Heart left ventricle (tissue), 16 donors: ENCODE measurements at regions of chr1 and their contacts with region 1.

Region 1: GRCh38 chr1:208892147-208892546 is 648.0 kb upstream of the PLXNA2 start:
- DNase-seq: no peak
- ATAC-seq: no peak
- H3K4me3 ChIP-seq: no peak overlapping the region
- H3K27ac ChIP-seq: no peak overlapping the region
- H3K4me1 ChIP-seq: no peaks in the 10 kb centered on the region
- H3K27me3 ChIP-seq: no peaks in the 10 kb centered on the region
- CTCF ChIP-seq: no peak
- POLR2A ChIP-seq: no peak

Region 2: DNA sequence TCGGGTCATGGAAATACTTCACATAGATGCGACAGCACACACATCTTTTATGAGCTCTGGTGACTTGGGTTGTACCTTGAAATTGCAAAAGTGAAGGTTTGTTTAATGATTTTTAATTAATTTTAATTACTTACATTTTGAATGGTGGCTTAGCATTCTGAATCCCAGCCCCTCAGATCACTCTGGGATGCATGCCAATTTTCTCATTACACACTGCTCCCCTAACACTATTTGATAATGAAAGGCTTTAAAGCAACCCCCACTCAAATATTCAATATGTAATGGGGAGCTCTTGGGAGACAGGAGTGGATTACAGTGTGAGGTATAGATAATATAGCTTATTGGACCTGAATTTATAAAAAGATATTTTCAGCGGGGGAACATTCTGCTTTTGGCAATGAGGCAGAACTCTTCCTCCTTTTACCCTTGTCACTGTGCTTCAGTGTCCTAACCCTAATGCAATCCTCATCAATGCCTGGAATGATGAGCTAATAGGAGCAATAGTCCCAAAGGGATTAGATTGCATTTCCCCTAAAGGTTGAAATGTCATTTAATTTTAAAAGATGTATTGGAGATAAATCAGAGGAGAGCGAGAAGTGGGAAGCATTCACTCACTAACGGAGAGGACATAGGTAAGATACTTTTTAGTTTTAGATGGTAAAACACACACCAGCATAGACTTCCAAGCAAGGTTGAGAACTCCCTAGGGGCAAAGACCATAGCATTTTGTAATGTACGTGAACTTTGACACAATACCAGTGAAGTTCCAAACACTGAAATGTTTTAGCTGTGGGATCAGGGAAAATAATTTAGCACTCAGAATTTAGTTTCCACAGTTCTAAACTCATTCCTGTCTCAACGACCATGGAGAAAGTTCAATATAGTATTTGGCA is 263.9 kb before region 1 on chr1:
- intact Hi-C with region 1: no loop called
- DNase-seq: no peak
- ATAC-seq: no peak
- H3K4me3 ChIP-seq: no peak overlapping the region
- H3K27ac ChIP-seq: no peak overlapping the region
- H3K4me1 ChIP-seq: no peaks in the 10 kb centered on the region
- H3K27me3 ChIP-seq: no peaks in the 10 kb centered on the region
- CTCF ChIP-seq: no peak
- POLR2A ChIP-seq: no peak

Region 3: GRCh38 chr1:208841436-208841835 is 50.7 kb before region 1 on chr1:
- intact Hi-C with region 1: loop called in 1 of 10 experiments (anchors 5 kb)
- DNase-seq: no peak
- ATAC-seq: no peak
- H3K4me3 ChIP-seq: no peak overlapping the region
- H3K27ac ChIP-seq: no peak overlapping the region
- H3K4me1 ChIP-seq: no peaks in the 10 kb centered on the region
- H3K27me3 ChIP-seq: no peaks in the 10 kb centered on the region
- CTCF ChIP-seq: no peak
- POLR2A ChIP-seq: no peak